CD4-positive, alpha-beta memory T cell (primary cell): ENCODE measurements at regions of chr22 and their contacts with region 1.

Region 1: DNA sequence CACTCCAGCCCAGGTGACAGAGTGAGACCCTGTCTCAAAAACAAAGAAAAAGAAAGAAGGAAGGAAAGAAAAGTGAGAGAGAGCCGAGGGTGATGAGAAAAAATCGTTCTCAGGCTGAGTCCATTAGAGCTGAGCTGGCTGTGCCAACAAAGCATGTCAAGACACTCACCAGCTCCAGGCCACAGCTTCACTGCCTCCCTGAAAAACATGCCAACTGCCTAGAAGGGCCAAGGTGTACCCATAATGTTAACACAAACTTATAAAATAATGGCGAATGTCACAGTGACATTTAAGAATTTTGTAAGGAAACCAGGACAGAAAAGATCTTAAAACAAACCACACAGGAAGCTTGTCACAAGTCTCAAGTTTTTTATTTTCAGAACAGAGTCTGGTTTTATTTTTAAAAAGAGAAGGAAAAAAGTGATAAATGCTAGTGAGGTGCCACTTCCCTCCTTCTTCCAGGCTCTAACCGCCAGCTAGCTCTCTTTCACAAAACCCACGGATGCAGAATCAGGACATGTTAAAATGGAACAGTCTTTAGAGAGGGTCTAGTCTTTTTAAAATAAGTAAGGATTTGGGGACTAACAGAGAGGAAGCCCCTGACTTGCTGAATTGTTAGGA is 5.1 kb downstream of the TMEM121B start:
- DNase-seq: no peak
- H3K4me3 ChIP-seq: peak overlapping the region; percentile 5 to 9
- H3K4me3 Mint-ChIP-seq: peak overlapping the region; percentile 29 to 88 (median 76)
- H3K27ac ChIP-seq: peak overlapping the region; percentile 36
- H3K27ac Mint-ChIP-seq: peak overlapping the region; percentile 65 to 95 (median 86)
- H3K4me1 ChIP-seq: peaks cover 56% of the 10 kb centered on the region
- H3K4me1 Mint-ChIP-seq: peaks cover 53 to 69% (median 60%) of the 10 kb centered on the region in 4 donors
- H3K27me3 ChIP-seq: no peaks in the 10 kb centered on the region
- H3K27me3 Mint-ChIP-seq: peaks cover 0 to 4% of the 10 kb centered on the region in 2 donors

Region 2: GRCh38 chr22:17095538-17095937 is 20.5 kb before region 1 on chr22:
- CTCF ChIA-PET with region 1: interaction called, 3 read pairs
- POLR2A ChIA-PET with region 1: interaction called, 5 read pairs
- intact Hi-C with region 1: loop called (anchors 2 kb)
- DNase-seq: no peak
- H3K4me3 ChIP-seq: no peak overlapping the region
- H3K4me3 Mint-ChIP-seq: peak overlapping the region in 3 of 8 donors; percentile 22 to 49 (median 33)
- H3K27ac ChIP-seq: no peak overlapping the region
- H3K27ac Mint-ChIP-seq: peak overlapping the region in 5 of 7 donors; percentile 55 to 86 (median 65)
- H3K4me1 ChIP-seq: peaks cover 94% of the 10 kb centered on the region
- H3K4me1 Mint-ChIP-seq: peaks cover 68 to 100% (median 84%) of the 10 kb centered on the region in 4 donors
- H3K27me3 ChIP-seq: no peaks in the 10 kb centered on the region
- H3K27me3 Mint-ChIP-seq: no peaks in the 10 kb centered on the region

Region 3: GRCh38 chr22:17201285-17201945 is 85.4 kb after region 1 on chr22:
- CTCF ChIA-PET with region 1: no interaction called
- POLR2A ChIA-PET with region 1: no interaction called
- intact Hi-C with region 1: no loop called
- DNase-seq: no peak
- H3K4me3 ChIP-seq: no peak overlapping the region
- H3K4me3 Mint-ChIP-seq: peak overlapping the region in 1 of 8 donors; percentile 56
- H3K27ac ChIP-seq: no peak overlapping the region
- H3K27ac Mint-ChIP-seq: peak overlapping the region in 5 of 7 donors; percentile 31 to 70 (median 48)
- H3K4me1 ChIP-seq: no peaks in the 10 kb centered on the region
- H3K4me1 Mint-ChIP-seq: peaks cover 6 to 10% (median 8%) of the 10 kb centered on the region in 4 donors
- H3K27me3 ChIP-seq: no peaks in the 10 kb centered on the region
- H3K27me3 Mint-ChIP-seq: no peaks in the 10 kb centered on the region